ENCODE measurements at regions of chr2 and their contacts with region 1.

Region 1: DNA sequence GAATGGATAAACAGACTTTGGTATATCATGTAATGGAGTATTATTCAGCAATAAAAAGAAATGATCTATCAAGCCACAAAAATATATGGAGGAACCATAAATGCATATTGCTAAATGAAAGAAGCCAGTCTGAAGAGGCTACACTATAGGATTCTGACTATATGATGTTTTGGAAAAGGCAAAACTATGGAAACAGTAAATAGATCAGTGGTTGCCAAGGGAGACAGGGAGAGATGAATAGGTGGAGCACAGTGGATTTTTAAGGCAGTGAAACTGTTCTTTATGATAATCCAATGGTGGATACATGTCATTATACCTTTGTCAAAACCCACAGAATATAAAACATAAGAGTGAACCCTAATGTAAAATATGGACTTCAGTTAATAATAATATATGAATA is 41.0 kb upstream of the SLC30A6 start:
- DNase-seq: no peak
- ATAC-seq: no peak
- H3K4me3 ChIP-seq: no peak overlapping the region
- H3K4me3 Mint-ChIP-seq: no peak overlapping the region
- H3K27ac ChIP-seq: no peak overlapping the region
- H3K27ac Mint-ChIP-seq: no peak overlapping the region
- H3K4me1 ChIP-seq: no peaks in the 10 kb centered on the region
- H3K4me1 Mint-ChIP-seq: no peaks in the 10 kb centered on the region
- H3K27me3 ChIP-seq: no peaks in the 10 kb centered on the region
- H3K27me3 Mint-ChIP-seq: no peaks in the 10 kb centered on the region
- CTCF ChIP-seq: no peak

Region 2: DNA sequence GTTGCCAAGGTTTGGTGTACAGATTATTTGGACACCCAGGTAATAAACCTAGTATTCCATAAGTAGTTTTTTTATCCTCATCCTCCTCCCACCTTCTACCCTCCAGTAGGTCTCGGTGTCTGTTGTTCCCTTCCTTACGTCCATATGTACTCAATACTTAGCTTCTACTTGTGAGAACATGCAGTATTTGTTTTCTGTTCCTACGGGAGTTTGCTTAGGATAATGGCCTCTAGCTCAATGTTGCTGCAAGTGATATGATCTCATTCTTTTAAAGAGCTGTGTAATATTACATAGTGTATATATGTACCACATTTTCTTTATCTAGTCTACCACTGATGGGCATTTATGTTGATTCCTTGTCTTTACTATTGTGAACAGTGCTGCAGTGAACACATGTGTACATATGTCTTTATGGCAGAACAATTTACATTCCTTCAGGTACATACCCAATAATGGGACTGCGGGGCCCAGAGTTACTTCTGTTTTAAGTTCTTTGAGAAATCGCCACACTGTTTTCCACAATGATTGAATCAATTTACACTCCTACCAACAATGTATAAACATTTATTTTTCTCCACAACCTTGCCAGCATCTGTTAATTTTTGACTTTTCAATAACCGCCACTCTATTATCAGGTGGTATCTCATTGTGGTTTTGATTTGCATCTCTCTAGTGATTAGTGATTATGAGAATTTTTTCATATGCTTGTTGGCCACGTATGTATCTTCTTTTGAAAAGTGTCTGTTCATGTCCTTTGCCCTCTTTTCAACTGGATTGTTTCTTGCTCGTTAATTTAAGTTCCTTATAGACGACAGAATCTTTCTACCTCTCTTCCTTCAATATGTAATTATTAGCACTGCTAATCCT is 201.9 kb before region 1 on chr2:
- CTCF ChIA-PET with region 1: no interaction called
- POLR2A ChIA-PET with region 1: no interaction called
- intact Hi-C with region 1: no loop called
- DNase-seq: no peak
- ATAC-seq: no peak
- H3K4me3 ChIP-seq: no peak overlapping the region
- H3K4me3 Mint-ChIP-seq: no peak overlapping the region
- H3K27ac ChIP-seq: no peak overlapping the region
- H3K27ac Mint-ChIP-seq: no peak overlapping the region
- H3K4me1 ChIP-seq: no peaks in the 10 kb centered on the region
- H3K4me1 Mint-ChIP-seq: peaks cover 13% of the 10 kb centered on the region
- H3K27me3 ChIP-seq: no peaks in the 10 kb centered on the region
- H3K27me3 Mint-ChIP-seq: no peaks in the 10 kb centered on the region
- CTCF ChIP-seq: no peak

Region 3: DNA sequence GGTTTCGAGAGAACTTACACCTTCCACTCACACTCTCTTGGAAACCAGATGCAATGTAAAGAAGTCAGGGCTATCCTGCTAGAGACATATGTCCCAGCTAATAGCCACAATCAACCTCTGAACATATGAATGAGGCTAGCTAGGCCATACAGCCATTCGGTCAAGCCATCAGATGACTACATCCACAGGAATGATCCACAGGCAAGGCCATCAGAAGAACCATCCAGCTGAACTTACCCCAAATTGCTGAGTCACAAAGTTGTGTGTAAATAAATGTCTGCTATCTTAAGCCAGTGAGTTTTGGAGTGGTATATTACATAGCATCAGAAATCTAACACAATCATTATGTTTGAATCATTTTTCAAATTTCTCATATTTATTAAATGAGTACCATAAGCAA is 66.5 kb before region 1 on chr2:
- CTCF ChIA-PET with region 1: no interaction called
- POLR2A ChIA-PET with region 1: no interaction called
- intact Hi-C with region 1: no loop called
- DNase-seq: no peak
- ATAC-seq: no peak
- H3K4me3 ChIP-seq: no peak overlapping the region
- H3K4me3 Mint-ChIP-seq: no peak overlapping the region
- H3K27ac ChIP-seq: no peak overlapping the region
- H3K27ac Mint-ChIP-seq: no peak overlapping the region
- H3K4me1 ChIP-seq: peaks cover 7% of the 10 kb centered on the region
- H3K4me1 Mint-ChIP-seq: peaks cover 10% of the 10 kb centered on the region
- H3K27me3 ChIP-seq: no peaks in the 10 kb centered on the region
- H3K27me3 Mint-ChIP-seq: no peaks in the 10 kb centered on the region
- CTCF ChIP-seq: no peak

Region 4: GRCh38 chr2:32074134-32074506 is 50.5 kb before region 1 on chr2:
- CTCF ChIA-PET with region 1: no interaction called
- POLR2A ChIA-PET with region 1: no interaction called
- intact Hi-C with region 1: loop called in 1 of 2 experiments (anchors 10 kb)
- DNase-seq: no peak
- ATAC-seq: no peak
- H3K4me3 ChIP-seq: no peak overlapping the region
- H3K4me3 Mint-ChIP-seq: no peak overlapping the region
- H3K27ac ChIP-seq: no peak overlapping the region
- H3K27ac Mint-ChIP-seq: peak overlapping the region; percentile 2
- H3K4me1 ChIP-seq: no peaks in the 10 kb centered on the region
- H3K4me1 Mint-ChIP-seq: peaks cover 49% of the 10 kb centered on the region
- H3K27me3 ChIP-seq: no peaks in the 10 kb centered on the region
- H3K27me3 Mint-ChIP-seq: no peaks in the 10 kb centered on the region
- CTCF ChIP-seq: no peak

Region 5: GRCh38 chr2:32189011-32189410 is 64.4 kb after region 1 on chr2:
- CTCF ChIA-PET with region 1: no interaction called
- POLR2A ChIA-PET with region 1: no interaction called
- intact Hi-C with region 1: no loop called
- DNase-seq: no peak
- ATAC-seq: no peak
- H3K4me3 ChIP-seq: no peak overlapping the region
- H3K4me3 Mint-ChIP-seq: no peak overlapping the region
- H3K27ac ChIP-seq: no peak overlapping the region
- H3K27ac Mint-ChIP-seq: no peak overlapping the region
- H3K4me1 ChIP-seq: no peaks in the 10 kb centered on the region
- H3K4me1 Mint-ChIP-seq: peaks cover 23% of the 10 kb centered on the region
- H3K27me3 ChIP-seq: no peaks in the 10 kb centered on the region
- H3K27me3 Mint-ChIP-seq: no peaks in the 10 kb centered on the region
- CTCF ChIP-seq: no peak

Measured in CD4-positive, alpha-beta T cell (primary cell).